ENCODE measurements at regions of chr1 and their contacts with region 1.

Region 1: GRCh38 chr1:226121587-226122400 is 59.3 kb downstream of the H3-3A start:
- DNase-seq: peak; percentile 86
- ATAC-seq: peak; percentile 79
- H3K4me3 Mint-ChIP-seq: peak overlapping the region; percentile 68
- H3K27ac Mint-ChIP-seq: peak overlapping the region; percentile 60
- H3K4me1 Mint-ChIP-seq: peaks cover 20% of the 10 kb centered on the region
- H3K27me3 Mint-ChIP-seq: no peaks in the 10 kb centered on the region

Region 2: GRCh38 chr1:225777583-225778336 is 344.0 kb before region 1 on chr1 and contains the start of gene SRP9:
- CTCF ChIA-PET with region 1: no interaction called
- POLR2A ChIA-PET with region 1: no interaction called
- intact Hi-C with region 1: loop called in 1 of 2 experiments (anchors 2 kb)
- DNase-seq: peak; percentile 99
- ATAC-seq: peak; percentile 97
- H3K4me3 Mint-ChIP-seq: no peak within 1 kb of the TSS
- H3K27ac Mint-ChIP-seq: no peak within 1 kb of the TSS
- H3K4me1 Mint-ChIP-seq: peaks cover 31% of the 10 kb centered on the region
- H3K27me3 Mint-ChIP-seq: no peaks in the 10 kb centered on the region
- total RNA-seq, gene SRP9: 263 to 308 TPM

Region 3: DNA sequence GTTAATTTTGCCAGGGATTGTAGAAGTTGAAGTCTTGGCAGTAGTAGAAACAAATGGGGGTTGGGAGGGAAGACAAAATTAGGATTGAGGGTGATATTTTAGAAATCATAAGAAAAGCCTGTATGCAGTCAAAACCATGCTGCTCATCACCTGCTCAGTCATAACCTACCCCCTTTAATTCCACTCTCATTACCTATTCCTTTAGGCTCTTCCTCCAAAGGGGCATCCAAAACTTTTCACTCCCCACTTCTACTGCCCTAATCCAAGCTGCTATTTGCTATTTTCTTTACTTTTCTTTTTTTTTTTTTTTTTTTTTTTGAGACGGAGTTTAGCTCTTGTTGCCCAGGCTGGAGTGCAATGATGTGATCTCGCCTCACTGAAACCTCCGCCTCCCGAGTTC is 47.7 kb before region 1 on chr1:
- CTCF ChIA-PET with region 1: interaction called, 4 read pairs
- POLR2A ChIA-PET with region 1: interaction called, 3 read pairs
- intact Hi-C with region 1: loop called in 1 of 2 experiments (anchors 1 kb)
- DNase-seq: no peak
- ATAC-seq: no peak
- H3K4me3 Mint-ChIP-seq: no peak overlapping the region
- H3K27ac Mint-ChIP-seq: no peak overlapping the region
- H3K4me1 Mint-ChIP-seq: peaks cover 22% of the 10 kb centered on the region
- H3K27me3 Mint-ChIP-seq: no peaks in the 10 kb centered on the region

Region 4: DNA sequence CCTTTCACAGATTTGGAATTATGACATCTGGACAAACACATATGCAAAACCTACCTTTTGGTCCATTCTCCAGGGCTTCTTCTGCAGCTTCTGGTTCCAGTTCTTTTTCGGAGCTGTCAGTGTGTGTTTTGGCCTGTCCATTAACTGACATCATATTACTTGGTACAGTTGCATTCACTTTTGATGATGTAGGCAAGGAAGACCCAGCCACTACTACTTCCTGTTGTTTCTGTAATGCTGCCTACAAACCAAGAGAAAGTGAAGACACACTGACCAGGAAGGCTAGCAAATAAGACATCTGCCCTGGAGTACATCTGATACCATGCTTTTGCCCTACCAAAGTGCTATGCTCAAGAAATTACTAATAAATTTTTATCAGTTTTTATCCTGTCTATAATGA is 32.8 kb after region 1 on chr1:
- CTCF ChIA-PET with region 1: interaction called, 15 read pairs
- POLR2A ChIA-PET with region 1: no interaction called
- intact Hi-C with region 1: no loop called
- DNase-seq: no peak
- ATAC-seq: no peak
- H3K4me3 Mint-ChIP-seq: no peak overlapping the region
- H3K27ac Mint-ChIP-seq: no peak overlapping the region
- H3K4me1 Mint-ChIP-seq: peaks cover 6% of the 10 kb centered on the region
- H3K27me3 Mint-ChIP-seq: no peaks in the 10 kb centered on the region

Region 5: DNA sequence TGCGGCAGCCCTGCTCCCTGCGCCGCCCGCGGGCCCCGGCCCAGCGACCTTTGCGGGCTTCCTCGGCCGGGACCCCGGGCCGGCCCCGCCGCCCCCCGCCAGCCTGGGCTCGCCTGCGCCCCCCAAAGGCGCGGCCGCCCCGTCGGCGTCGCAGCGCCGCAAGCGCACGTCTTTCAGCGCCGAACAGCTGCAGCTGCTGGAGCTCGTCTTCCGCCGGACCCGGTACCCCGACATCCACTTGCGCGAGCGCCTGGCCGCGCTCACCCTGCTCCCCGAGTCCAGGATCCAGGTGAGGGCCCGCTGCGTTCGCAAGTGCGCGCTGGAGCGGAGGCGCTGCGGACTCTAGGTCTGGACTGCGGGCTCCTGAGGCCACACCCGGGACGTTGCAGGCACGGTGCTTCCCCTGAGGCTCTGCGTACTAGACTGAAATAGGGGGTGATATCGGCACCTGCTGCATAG is 102.0 kb after region 1 on chr1:
- CTCF ChIA-PET with region 1: interaction called, 12 read pairs
- POLR2A ChIA-PET with region 1: no interaction called
- intact Hi-C with region 1: no loop called
- DNase-seq: peak; percentile 52
- ATAC-seq: peak; percentile 61
- H3K4me3 Mint-ChIP-seq: peak overlapping the region; percentile 67
- H3K27ac Mint-ChIP-seq: no peak overlapping the region
- H3K4me1 Mint-ChIP-seq: peaks cover 8% of the 10 kb centered on the region
- H3K27me3 Mint-ChIP-seq: peaks cover 19% of the 10 kb centered on the region

Region 6: DNA sequence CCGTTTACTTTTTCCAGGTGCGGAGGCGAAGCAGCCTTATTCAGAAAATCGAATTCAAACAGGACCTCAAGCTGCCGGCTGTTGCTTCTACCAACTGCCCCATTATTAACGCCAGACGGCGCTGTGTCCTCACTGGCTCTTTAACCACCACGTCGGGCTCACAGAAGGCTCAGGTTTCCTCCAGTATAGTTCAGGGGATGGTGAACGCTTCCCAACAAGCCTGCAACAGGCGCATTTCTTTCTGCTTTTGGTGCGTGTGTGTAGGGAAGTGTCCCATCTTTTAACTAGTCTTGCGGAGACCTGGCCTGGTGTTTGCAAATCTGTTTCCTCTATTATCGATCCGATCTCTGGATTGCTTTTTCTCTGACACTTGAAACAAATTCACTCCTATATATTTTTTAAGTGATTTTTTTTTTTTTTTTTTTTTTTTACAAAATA is 426.0 kb after region 1 on chr1:
- CTCF ChIA-PET with region 1: no interaction called
- POLR2A ChIA-PET with region 1: no interaction called
- intact Hi-C with region 1: loop called in 1 of 2 experiments (anchors 10 kb)
- DNase-seq: peak; percentile 82
- ATAC-seq: peak; percentile 70
- H3K4me3 Mint-ChIP-seq: no peak overlapping the region
- H3K27ac Mint-ChIP-seq: no peak overlapping the region
- H3K4me1 Mint-ChIP-seq: peaks cover 14% of the 10 kb centered on the region
- H3K27me3 Mint-ChIP-seq: peaks cover 38% of the 10 kb centered on the region